Breast epithelium (tissue), 4 donors: ENCODE measurements at regions of chr6 and their contacts with region 1.

Region 1: GRCh38 chr6:35731736-35732532 is 4.9 kb upstream of the ARMC12 start:
- DNase-seq: peak; percentile 95 to 96
- H3K4me3 ChIP-seq: peak overlapping the region; percentile 56 to 79 (median 64)
- H3K27ac ChIP-seq: peak overlapping the region; percentile 98 to 99
- H3K4me1 ChIP-seq: peaks cover 42 to 52% of the 10 kb centered on the region in 2 donors
- H3K27me3 ChIP-seq: no peaks in the 10 kb centered on the region
- CTCF ChIP-seq: peak in 2 of 3 donors; percentile 7 to 10
- POLR2A ChIP-seq: no peak

Region 2: DNA sequence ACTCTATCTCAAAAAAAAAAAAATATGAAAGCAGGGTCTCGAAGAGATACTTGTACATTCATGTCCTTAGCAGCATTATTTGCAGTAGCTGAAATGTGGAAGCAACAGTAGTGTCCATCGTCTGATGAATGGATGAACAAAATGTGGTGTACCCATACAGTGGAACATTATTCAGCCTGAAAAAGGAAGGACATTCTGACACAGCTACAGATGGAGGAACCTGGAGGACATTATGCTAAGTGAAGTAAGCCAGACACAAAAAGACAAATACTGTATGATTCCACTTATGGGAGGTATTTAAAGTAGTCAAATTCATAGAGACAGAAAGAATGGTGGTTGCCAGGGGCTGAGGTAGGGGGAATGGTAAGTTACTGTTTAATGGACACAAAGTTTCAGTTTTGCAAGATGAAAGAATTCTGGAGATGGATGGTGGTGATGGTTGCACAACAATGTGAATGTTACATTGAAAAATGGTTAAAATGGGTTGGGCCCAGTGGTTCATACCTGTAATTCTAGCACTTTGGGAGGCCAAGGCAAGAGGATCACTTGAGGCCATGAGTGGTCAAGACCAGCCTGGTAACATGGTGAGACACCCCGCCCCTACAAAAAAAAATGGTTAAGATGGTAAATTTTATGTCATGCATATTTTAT is 207.4 kb before region 1 on chr6:
- intact Hi-C with region 1: loop called (anchors 5 kb)
- DNase-seq: no peak
- H3K4me3 ChIP-seq: no peak overlapping the region
- H3K27ac ChIP-seq: no peak overlapping the region
- H3K4me1 ChIP-seq: no peaks in the 10 kb centered on the region
- H3K27me3 ChIP-seq: no peaks in the 10 kb centered on the region
- CTCF ChIP-seq: no peak
- POLR2A ChIP-seq: no peak

Region 3: GRCh38 chr6:35586546-35586945 is 145.4 kb before region 1 on chr6:
- intact Hi-C with region 1: loop called (anchors 5 kb)
- DNase-seq: peak in 1 of 2 donors; percentile 74
- H3K4me3 ChIP-seq: no peak overlapping the region
- H3K27ac ChIP-seq: peak overlapping the region; percentile 26 to 73
- H3K4me1 ChIP-seq: peaks cover 7 to 17% of the 10 kb centered on the region in 2 donors
- H3K27me3 ChIP-seq: no peaks in the 10 kb centered on the region
- CTCF ChIP-seq: no peak
- POLR2A ChIP-seq: no peak

Region 4: GRCh38 chr6:35688581-35689322 is 43.2 kb before region 1 on chr6 and contains the start of gene FKBP5:
- intact Hi-C with region 1: loop called (anchors 1 kb)
- DNase-seq: peak; percentile 93 to 95
- H3K4me3 ChIP-seq: peak within 1 kb of the TSS; percentile 76 to 99 (median 86)
- H3K27ac ChIP-seq: peak within 1 kb of the TSS; percentile 91 to 94
- H3K4me1 ChIP-seq: peaks cover 5 to 6% of the 10 kb centered on the region in 2 donors
- H3K27me3 ChIP-seq: no peaks in the 10 kb centered on the region
- CTCF ChIP-seq: peak in 1 of 3 donors; percentile 10
- POLR2A ChIP-seq: no peak
- total RNA-seq, gene FKBP5: 167 to 970 (median 266) TPM

Region 5: DNA sequence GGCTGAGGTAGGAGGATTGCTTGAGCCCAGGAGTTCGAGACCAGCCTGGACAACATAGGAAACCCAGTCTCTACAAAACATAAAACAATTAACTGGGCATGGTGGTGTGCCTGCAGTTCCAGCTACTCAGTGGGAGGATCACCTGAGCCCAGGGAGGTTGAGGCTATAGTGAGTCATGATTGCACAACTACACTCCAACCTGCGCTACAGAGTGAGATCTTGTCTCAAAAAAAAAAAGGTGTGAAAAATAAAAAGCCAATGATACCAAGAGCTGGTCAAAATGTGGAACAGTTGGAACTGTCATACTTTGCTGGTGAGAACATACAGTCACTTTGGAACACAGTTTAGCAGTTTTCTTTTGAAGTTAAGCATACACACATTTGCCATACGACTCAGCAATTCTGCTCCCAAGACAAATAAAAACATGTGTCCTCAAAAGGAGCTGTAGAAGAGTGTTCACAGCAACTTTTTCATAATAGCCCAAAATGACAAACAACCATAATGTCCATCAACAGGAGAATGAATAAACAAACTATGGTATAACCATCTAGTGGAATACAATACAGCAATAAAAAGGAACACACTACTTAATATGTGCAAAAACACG is 21.6 kb before region 1 on chr6:
- intact Hi-C with region 1: no loop called
- DNase-seq: peak in 1 of 2 donors; percentile 39
- H3K4me3 ChIP-seq: no peak overlapping the region
- H3K27ac ChIP-seq: no peak overlapping the region
- H3K4me1 ChIP-seq: no peaks in the 10 kb centered on the region
- H3K27me3 ChIP-seq: no peaks in the 10 kb centered on the region
- CTCF ChIP-seq: no peak
- POLR2A ChIP-seq: no peak